ENCODE measurements at regions of chr2 and their contacts with region 1.

Region 1: GRCh38 chr2:199850718-199851500 is at the start of gene FTCDNL1:
- DNase-seq: peak; percentile 83 to 89 (median 88)
- H3K4me3 ChIP-seq: peak within 1 kb of the TSS; percentile 26 to 91 (median 68)
- H3K27ac ChIP-seq: peak within 1 kb of the TSS; percentile 85 to 94 (median 87)
- H3K4me1 ChIP-seq: no peaks in the 10 kb centered on the region
- H3K27me3 ChIP-seq: no peaks in the 10 kb centered on the region
- CTCF ChIP-seq: peak; percentile 8 to 61 (median 34)
- POLR2A ChIP-seq: peak; percentile 66 to 77
- total RNA-seq, gene FTCDNL1: 4.6 to 19.1 (median 11.5) TPM

Region 2: DNA sequence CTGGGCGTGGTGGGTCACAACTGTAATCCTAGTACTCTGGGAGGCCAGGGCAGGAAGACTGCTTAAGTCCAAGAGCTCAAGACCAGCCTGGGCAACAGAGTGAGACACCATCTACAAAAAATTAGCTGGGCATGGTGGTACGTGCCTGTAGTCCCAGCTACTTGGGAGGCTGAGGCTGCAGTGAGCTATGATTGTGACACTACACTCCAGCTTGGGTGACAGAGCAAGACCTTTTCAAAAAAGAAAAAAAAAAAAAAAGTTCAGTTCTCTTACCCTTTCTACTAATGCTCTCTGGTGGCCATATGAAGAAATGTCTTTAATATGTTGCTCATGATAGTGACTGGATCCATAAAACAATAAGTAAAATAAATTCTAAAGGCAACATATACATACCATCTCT is 89.5 kb after region 1 on chr2:
- intact Hi-C with region 1: loop called in 1 of 2 experiments (anchors 10 kb)
- DNase-seq: peak in 4 of 7 donors; percentile 28 to 51 (median 40)
- H3K4me3 ChIP-seq: no peak overlapping the region
- H3K27ac ChIP-seq: no peak overlapping the region
- H3K4me1 ChIP-seq: peaks cover 12 to 19% of the 10 kb centered on the region in 2 donors
- H3K27me3 ChIP-seq: no peaks in the 10 kb centered on the region
- CTCF ChIP-seq: peak; percentile 18 to 64 (median 46)
- POLR2A ChIP-seq: no peak

Measured in adrenal gland (tissue), 19 donors.